ENCODE measurements at regions of chr1 and their contacts with region 1.

Region 1: DNA sequence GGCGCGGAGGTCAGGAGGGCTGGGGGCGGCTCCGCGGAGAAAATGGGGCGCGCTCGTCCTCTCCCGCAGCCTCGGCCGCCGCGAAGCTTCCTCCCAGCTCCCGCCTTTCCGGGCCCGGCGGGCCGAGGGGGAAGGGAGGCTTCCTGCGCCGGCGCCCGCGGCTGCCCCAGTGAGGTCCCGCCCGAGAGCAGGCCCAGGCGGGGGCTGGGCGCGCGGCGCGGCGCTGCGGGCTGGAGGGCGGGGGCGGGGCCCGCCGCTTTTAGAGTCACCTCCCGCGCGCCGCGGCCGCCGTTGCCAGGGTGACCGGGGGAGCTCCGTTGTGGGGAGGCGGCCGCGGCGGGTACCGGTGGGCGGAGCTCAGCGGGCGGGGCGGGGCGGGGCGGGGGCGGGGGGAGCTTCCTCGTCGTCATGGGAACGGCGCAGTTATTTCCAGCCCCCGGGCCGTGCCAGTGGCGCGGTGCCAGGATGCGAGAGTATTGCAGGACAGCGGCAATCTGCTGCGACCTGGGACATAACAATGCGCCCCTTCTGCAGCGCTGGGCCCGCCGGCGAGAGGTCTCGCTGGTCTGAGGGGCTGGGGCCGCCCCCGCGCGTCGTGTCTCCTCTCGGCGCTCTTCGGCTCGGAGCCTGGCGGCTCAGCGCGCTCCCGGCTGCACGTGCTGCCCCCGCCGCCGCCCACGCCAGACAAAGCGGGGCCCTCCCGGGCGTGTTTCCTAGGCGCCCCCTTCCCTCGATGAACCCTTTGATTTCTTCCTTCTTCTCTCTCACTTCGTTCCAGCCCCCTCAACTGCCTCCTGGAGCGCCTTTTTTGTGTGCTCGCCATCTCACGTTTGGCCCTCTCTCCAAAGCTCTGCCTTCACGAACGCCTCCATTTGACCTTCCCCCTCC is 16.9 kb downstream of the IER5 start:
- DNase-seq: peak; percentile 89
- ATAC-seq: peak; percentile 63
- H3K4me3 Mint-ChIP-seq: peak overlapping the region; percentile 85
- H3K27ac Mint-ChIP-seq: no peak overlapping the region
- H3K4me1 Mint-ChIP-seq: peaks cover 83% of the 10 kb centered on the region
- H3K27me3 Mint-ChIP-seq: peaks cover 73% of the 10 kb centered on the region
- CTCF ChIP-seq: no peak

Region 2: GRCh38 chr1:181128592-181129497 is 23.5 kb after region 1 on chr1:
- CTCF ChIA-PET with region 1: interaction called, 27 read pairs
- POLR2A ChIA-PET with region 1: interaction called, 12 read pairs
- DNase-seq: no peak
- ATAC-seq: peak; percentile 67
- H3K4me3 Mint-ChIP-seq: peak overlapping the region; percentile 31
- H3K27ac Mint-ChIP-seq: peak overlapping the region; percentile 8; the same call in 1 of the 2 replicates
- H3K4me1 Mint-ChIP-seq: peaks cover 60% of the 10 kb centered on the region
- H3K27me3 Mint-ChIP-seq: peaks cover 7% of the 10 kb centered on the region; the same call in 1 of the 2 replicates
- CTCF ChIP-seq: no peak

Region 3: GRCh38 chr1:181134543-181135362 is 29.4 kb after region 1 on chr1:
- CTCF ChIA-PET with region 1: interaction called, 14 read pairs
- POLR2A ChIA-PET with region 1: interaction called, 5 read pairs
- DNase-seq: no peak
- ATAC-seq: no peak
- H3K4me3 Mint-ChIP-seq: no peak overlapping the region
- H3K27ac Mint-ChIP-seq: peak overlapping the region; percentile 77
- H3K4me1 Mint-ChIP-seq: peaks cover 57% of the 10 kb centered on the region
- H3K27me3 Mint-ChIP-seq: peaks cover 8% of the 10 kb centered on the region; the same call in 1 of the 2 replicates
- CTCF ChIP-seq: no peak

Measured in WTC11 (cell line).